PC-9 (cell line): ENCODE measurements at regions of chr11 and their contacts with region 1.

Region 1: GRCh38 chr11:47606731-47607130 is 12.5 kb upstream of the C1QTNF4 start:
- DNase-seq: no peak
- H3K4me3 ChIP-seq: no peak overlapping the region
- H3K27ac ChIP-seq: no peak overlapping the region
- H3K4me1 ChIP-seq: no peaks in the 10 kb centered on the region
- H3K27me3 ChIP-seq: no peaks in the 10 kb centered on the region
- CTCF ChIP-seq: no peak

Region 2: GRCh38 chr11:47616726-47617416 is 10.1 kb after region 1 on chr11:
- CTCF ChIA-PET with region 1: no interaction called
- POLR2A ChIA-PET with region 1: interaction called, 14 read pairs
- intact Hi-C with region 1: no loop called
- DNase-seq: peak in 1 of 2 experiments; percentile 32
- H3K4me3 ChIP-seq: no peak overlapping the region
- H3K27ac ChIP-seq: no peak overlapping the region
- H3K4me1 ChIP-seq: no peaks in the 10 kb centered on the region
- H3K27me3 ChIP-seq: no peaks in the 10 kb centered on the region
- CTCF ChIP-seq: peak; percentile 69